PC-9 (cell line): ENCODE measurements at regions of chr3 and their contacts with region 1.

Region 1: DNA sequence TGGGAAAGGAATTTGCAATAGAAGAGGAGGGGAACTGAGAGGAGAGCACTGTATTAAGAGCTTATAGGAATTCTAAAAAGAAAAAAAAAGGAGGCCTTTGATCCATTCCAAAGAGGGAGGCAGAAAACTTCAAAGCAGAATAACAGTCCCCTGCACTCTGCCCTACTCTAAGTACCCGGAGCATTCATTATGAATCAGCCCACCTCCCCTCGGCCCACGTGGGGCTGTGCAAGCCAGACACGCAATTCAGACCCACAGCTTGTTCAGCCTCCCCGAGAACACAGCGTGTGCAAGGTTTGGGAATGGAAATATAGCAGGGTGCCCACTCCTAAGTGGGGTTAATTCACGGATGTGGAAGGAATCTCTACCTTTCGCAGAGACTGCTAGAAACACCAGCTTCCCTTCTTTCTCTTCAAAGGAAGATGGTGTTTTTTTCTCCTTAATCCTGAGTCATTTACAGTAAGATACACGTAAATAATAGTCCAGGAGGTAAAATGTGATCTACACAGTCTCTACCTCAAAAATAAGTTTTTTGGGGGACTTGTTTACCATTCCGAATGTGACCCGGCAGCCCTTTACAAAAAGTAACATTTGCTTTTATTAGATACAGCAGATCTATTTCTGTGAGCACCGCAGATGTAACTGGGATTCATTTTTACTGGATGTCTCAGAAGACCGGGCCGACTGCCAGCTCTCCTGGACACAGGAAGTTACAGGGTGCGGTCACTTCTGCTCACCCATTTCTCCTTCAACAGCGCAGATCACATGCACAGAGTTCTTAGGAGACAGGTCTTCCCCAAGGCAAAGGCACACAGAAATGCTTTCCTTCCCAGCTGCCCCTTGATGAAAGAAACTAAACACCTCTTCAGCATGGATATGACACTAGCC is 768.5 kb upstream of the CFAP20DC start:
- DNase-seq: peak; percentile 82 to 91
- H3K4me3 ChIP-seq: peak overlapping the region; percentile 35; the same call in 1 of the 2 replicates
- H3K27ac ChIP-seq: peak overlapping the region; percentile 95
- H3K4me1 ChIP-seq: peaks cover 56% of the 10 kb centered on the region
- H3K27me3 ChIP-seq: no peaks in the 10 kb centered on the region
- CTCF ChIP-seq: no peak

Region 2: DNA sequence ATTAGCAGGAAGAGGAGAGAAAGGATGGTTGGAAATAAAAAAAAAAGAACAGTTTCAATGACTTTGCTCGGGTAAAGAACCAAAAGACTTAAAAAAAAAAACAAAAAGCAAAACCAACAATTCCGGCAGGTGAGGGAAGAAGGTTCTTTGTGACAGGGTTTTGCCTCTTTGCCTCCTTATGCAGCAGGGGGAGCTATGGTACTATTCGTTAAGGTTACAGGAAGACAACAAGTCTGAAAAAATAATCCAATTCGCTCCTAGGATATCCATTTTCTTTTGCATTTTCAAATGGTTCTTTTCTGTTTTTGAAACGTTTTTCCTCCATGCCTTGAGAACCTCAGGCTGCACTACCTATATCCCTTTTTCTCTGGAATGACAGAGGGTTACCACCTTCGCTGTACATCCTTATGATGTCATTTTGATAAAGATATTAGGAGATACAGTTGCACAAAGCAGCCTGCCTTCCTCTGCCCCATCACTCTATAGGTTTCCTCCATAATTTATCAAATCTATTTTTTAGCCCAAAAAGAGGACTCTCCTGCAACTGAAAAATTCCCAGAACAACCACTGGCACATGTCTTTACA is 823.4 kb before region 1 on chr3:
- CTCF ChIA-PET with region 1: no interaction called
- POLR2A ChIA-PET with region 1: no interaction called
- intact Hi-C with region 1: loop called (anchors 5 kb)
- DNase-seq: peak in 1 of 2 experiments; percentile 35
- H3K4me3 ChIP-seq: no peak overlapping the region
- H3K27ac ChIP-seq: no peak overlapping the region
- H3K4me1 ChIP-seq: peaks cover 16% of the 10 kb centered on the region
- H3K27me3 ChIP-seq: no peaks in the 10 kb centered on the region
- CTCF ChIP-seq: peak; percentile 78

Region 3: DNA sequence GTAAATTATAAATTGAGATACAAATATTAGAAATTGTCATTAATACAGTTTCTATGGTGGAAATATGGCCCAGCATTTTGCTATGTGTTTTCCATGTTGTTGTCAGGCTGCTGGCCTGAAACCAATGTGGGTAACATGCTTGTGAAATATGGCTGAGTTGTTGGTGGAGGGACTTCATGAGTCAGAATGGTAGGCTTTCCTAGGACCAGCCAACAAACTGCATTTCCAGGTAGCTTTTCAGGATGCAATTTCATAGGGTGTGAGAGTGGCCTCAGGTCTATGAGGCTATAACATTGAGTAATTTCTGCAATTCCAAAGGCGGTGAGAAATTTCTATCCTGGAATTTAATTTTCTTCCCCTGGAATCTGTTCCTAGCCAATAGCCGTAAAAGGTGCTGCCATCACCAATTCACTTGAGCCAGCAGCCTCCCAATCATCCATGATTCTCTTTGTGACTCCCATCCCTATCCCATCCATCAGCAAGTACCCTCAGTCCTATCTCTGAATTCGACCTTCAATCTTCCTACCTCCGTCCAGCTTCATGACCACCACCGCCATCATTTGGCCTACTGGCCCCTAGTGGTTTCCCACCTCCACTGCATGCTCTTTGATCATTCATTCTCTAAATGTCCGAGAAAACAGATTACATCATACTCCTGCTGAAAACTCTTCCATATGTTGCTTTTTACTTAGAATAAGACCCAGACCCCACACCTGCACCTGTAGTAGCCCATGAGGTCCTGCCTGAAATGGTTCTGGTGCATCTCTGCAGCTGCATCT is 491.8 kb before region 1 on chr3:
- CTCF ChIA-PET with region 1: no interaction called
- POLR2A ChIA-PET with region 1: no interaction called
- intact Hi-C with region 1: loop called (anchors 5 kb)
- DNase-seq: no peak
- H3K4me3 ChIP-seq: no peak overlapping the region
- H3K27ac ChIP-seq: 0 out of 2 replicates have a peak overlapping the region, but pooled peaks have one; percentile 37
- H3K4me1 ChIP-seq: peaks cover 9% of the 10 kb centered on the region; the same call in 1 of the 2 replicates
- H3K27me3 ChIP-seq: no peaks in the 10 kb centered on the region
- CTCF ChIP-seq: no peak

Region 4: DNA sequence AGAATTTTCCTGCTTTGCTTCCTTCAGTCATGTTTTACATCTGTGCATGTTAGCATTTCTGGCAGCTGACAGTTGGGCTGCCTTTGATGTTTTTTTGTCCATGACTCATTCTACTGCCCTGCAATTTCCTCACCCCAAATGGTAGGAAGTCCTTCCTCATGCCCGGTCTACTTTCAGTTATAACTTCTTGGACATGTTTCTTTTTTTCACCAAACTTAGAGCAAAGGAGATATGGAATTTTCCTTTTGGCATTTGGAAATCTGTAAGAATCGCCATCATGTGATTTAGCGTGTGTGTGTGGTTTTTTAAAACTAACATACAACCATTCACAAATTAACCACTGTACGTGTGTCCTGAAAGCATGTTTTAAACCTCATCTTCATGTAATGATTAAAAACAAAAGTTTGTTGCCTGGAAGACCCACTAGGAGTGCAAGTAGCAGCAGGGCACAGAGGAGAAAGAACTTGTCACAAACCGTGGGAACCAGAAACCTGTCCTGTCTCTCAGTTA is 337.7 kb before region 1 on chr3:
- CTCF ChIA-PET with region 1: no interaction called
- POLR2A ChIA-PET with region 1: no interaction called
- intact Hi-C with region 1: loop called (anchors 5 kb)
- DNase-seq: peak in 1 of 2 experiments; percentile 14
- H3K4me3 ChIP-seq: no peak overlapping the region
- H3K27ac ChIP-seq: no peak overlapping the region
- H3K4me1 ChIP-seq: peaks cover 20% of the 10 kb centered on the region
- H3K27me3 ChIP-seq: no peaks in the 10 kb centered on the region
- CTCF ChIP-seq: no peak

Region 5: GRCh38 chr3:59502806-59503205 is 315.5 kb before region 1 on chr3:
- CTCF ChIA-PET with region 1: no interaction called
- POLR2A ChIA-PET with region 1: no interaction called
- intact Hi-C with region 1: no loop called
- DNase-seq: no peak
- H3K4me3 ChIP-seq: no peak overlapping the region
- H3K27ac ChIP-seq: no peak overlapping the region
- H3K4me1 ChIP-seq: no peaks in the 10 kb centered on the region
- H3K27me3 ChIP-seq: no peaks in the 10 kb centered on the region; the same call in 1 of the 2 replicates
- CTCF ChIP-seq: no peak

Region 6: DNA sequence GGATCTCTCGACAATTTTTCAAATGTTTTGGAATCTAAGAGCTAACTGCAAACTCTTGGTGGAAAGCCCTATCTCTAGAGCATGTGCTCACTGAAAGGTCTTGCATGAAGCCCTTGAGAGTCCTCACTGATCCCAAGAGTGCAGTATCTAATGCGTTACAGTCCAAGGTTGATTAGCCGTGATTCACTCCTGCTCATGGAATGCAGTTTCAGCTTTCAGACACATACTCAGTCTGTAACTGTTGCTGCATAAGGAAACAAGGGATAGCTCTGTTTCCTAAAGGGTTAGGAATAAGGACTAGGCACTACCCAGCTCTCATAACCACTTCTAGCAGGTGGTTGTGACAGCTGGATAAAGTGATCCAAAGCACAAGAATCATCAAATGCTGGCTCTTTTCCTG is 81.0 kb before region 1 on chr3:
- CTCF ChIA-PET with region 1: no interaction called
- POLR2A ChIA-PET with region 1: interaction called, 23 read pairs
- intact Hi-C with region 1: loop called (anchors 2 kb)
- DNase-seq: no peak
- H3K4me3 ChIP-seq: no peak overlapping the region
- H3K27ac ChIP-seq: no peak overlapping the region
- H3K4me1 ChIP-seq: no peaks in the 10 kb centered on the region
- H3K27me3 ChIP-seq: peaks cover 6% of the 10 kb centered on the region; the same call in 1 of the 2 replicates
- CTCF ChIP-seq: no peak